ENCODE measurements at regions of chr1 and their contacts with region 1.

Region 1: GRCh38 chr1:193183019-193183627 is 3.3 kb downstream of the B3GALT2 start:
- DNase-seq: no peak
- ATAC-seq: no peak
- H3K4me3 ChIP-seq: no peak overlapping the region
- H3K27ac ChIP-seq: no peak overlapping the region
- H3K4me1 ChIP-seq: peaks cover 57 to 61% of the 10 kb centered on the region in 2 donors
- H3K27me3 ChIP-seq: no peaks in the 10 kb centered on the region
- CTCF ChIP-seq: peak; percentile 25 to 79 (median 64)
- POLR2A ChIP-seq: no peak

Region 2: GRCh38 chr1:193293726-193294125 is 110.6 kb after region 1 on chr1:
- in situ Hi-C with region 1: no loop called
- intact Hi-C with region 1: no loop called
- DNase-seq: no peak
- ATAC-seq: no peak
- H3K4me3 ChIP-seq: no peak overlapping the region
- H3K27ac ChIP-seq: no peak overlapping the region
- H3K4me1 ChIP-seq: no peaks in the 10 kb centered on the region
- H3K27me3 ChIP-seq: no peaks in the 10 kb centered on the region
- CTCF ChIP-seq: no peak
- POLR2A ChIP-seq: no peak

Region 3: GRCh38 chr1:194295685-194296084 is 1112.6 kb after region 1 on chr1:
- in situ Hi-C with region 1: loop called in 1 of 4 experiments (anchors 25 kb)
- intact Hi-C with region 1: no loop called
- DNase-seq: no peak
- ATAC-seq: no peak
- H3K4me3 ChIP-seq: no peak overlapping the region
- H3K27ac ChIP-seq: no peak overlapping the region
- H3K4me1 ChIP-seq: no peaks in the 10 kb centered on the region
- H3K27me3 ChIP-seq: no peaks in the 10 kb centered on the region
- CTCF ChIP-seq: no peak
- POLR2A ChIP-seq: no peak

Measured in gastrocnemius medialis (tissue), 4 donors.